Esophagus muscularis mucosa (tissue), 4 donors: ENCODE measurements at regions of chr13 and their contacts with region 1.

Region 1: GRCh38 chr13:29923554-29924481 is 73.4 kb upstream of the UBL3 start:
- DNase-seq: no peak
- H3K4me3 ChIP-seq: peak overlapping the region in 1 of 4 donors; percentile 9
- H3K27ac ChIP-seq: peak overlapping the region; percentile 76 to 92 (median 82)
- H3K4me1 ChIP-seq: peaks cover 27 to 57% (median 48%) of the 10 kb centered on the region in 4 donors
- H3K27me3 ChIP-seq: no peaks in the 10 kb centered on the region
- CTCF ChIP-seq: peak; percentile 62 to 69 (median 66)
- EP300 ChIP-seq: no peak
- POLR2A ChIP-seq: no peak

Region 2: GRCh38 chr13:29771247-29771646 is 152.6 kb before region 1 on chr13:
- intact Hi-C with region 1: loop called (anchors 10 kb)
- DNase-seq: no peak
- H3K4me3 ChIP-seq: no peak overlapping the region
- H3K27ac ChIP-seq: no peak overlapping the region
- H3K4me1 ChIP-seq: peaks cover 0 to 16% (median 6%) of the 10 kb centered on the region in 4 donors
- H3K27me3 ChIP-seq: no peaks in the 10 kb centered on the region
- CTCF ChIP-seq: peak; percentile 42 to 56 (median 49)
- EP300 ChIP-seq: no peak
- POLR2A ChIP-seq: no peak

Region 3: DNA sequence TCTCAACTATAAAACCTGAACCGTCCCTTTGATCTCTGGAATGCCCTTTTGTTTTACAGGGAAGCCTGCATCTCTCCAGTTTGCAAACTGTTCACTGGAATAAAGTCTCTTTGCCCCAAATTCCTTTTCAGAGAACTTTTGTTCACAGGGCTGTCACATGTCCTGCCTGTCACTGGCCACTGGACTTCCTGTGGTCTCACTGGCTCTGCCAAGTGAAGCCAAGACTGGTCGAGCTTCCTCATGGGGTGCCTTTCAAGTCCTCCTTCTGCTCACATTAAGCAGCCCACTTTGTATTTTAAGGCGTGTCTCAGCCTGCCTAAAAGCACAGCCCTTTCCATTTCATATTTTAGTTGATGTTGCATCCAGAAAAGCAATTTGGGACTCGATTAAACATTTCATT is 167.9 kb after region 1 on chr13:
- intact Hi-C with region 1: no loop called
- DNase-seq: no peak
- H3K4me3 ChIP-seq: no peak overlapping the region
- H3K27ac ChIP-seq: no peak overlapping the region
- H3K4me1 ChIP-seq: no peaks in the 10 kb centered on the region
- H3K27me3 ChIP-seq: no peaks in the 10 kb centered on the region
- CTCF ChIP-seq: no peak
- EP300 ChIP-seq: no peak
- POLR2A ChIP-seq: no peak

Region 4: DNA sequence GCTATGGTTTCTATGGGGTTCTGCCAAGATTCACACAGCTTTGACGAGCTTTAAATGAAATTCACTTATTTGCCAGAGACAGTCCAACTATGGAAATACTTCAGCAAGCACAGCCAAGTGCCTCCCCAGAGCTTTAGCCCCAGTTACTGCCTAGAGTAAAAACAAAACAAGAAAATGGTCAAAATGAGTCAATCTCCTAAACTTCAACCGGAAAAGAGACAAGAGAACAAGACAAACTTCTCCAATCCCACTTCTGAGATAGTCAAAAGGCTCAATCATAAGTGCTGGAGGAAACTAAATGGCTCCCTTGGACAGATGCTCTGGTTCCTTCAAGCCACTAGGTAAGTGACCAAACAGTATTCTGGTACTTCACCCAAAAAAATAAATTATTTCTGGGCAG is 317.7 kb after region 1 on chr13:
- intact Hi-C with region 1: no loop called
- DNase-seq: no peak
- H3K4me3 ChIP-seq: no peak overlapping the region
- H3K27ac ChIP-seq: no peak overlapping the region
- H3K4me1 ChIP-seq: peaks cover 0 to 20% (median 14%) of the 10 kb centered on the region in 4 donors
- H3K27me3 ChIP-seq: no peaks in the 10 kb centered on the region
- CTCF ChIP-seq: no peak
- EP300 ChIP-seq: no peak
- POLR2A ChIP-seq: no peak